IMR-90 (cell line): ENCODE measurements at regions of chr9 and their contacts with region 1.

Region 1: DNA sequence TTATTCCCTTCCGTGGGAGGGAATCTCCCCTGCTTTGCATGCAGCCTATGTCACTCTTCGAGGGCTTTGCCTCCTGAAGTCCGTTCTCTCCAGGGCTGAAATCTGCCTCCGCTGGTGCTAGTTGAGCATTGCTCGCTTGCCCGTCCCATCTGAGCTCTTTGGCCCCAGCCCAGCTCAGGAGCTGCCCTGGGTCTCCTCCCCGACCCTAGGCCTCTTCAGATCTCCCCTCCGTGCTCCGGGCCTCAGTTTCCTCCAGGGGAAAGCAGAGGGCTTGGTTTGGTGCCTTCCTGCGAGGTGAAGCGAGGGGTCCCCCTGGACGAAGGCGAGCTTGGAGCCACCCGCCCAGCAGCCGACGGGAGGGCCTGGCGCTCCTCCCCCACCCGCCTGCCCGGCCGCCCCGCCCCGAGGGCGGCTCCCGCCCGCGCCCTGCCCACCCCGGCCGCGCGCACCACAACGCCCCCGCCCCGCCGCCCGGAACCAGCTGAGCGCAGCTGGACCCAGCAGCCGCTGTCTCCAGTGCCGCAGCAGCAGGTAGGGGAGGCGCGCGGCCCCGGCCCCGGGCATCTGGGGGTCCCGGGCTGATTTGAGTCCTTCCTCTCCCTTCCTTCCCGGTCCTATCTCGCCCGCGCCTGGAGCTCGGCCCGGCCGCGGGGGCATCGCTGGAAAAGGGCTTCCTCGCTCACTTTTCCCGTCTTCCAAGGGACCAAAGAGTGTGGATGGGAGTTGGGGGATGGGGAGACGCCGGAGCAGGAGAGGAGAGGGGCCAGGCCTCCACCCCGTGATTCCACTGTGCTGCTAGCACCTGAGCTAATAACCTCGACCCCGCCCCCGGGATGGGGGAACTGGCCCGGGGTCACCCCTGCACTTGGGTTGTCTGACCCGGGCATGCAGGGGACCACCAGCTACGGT is at the start of gene GSN:
- DNase-seq: peak; percentile 50
- ATAC-seq: peak; percentile 84
- H3K4me3 ChIP-seq: peak within 1 kb of the TSS; percentile 91
- H3K27ac ChIP-seq: peak within 1 kb of the TSS; percentile 87
- H3K4me1 ChIP-seq: peaks cover 24% of the 10 kb centered on the region
- H3K27me3 ChIP-seq: no peaks in the 10 kb centered on the region
- CTCF ChIP-seq: no peak
- POLR2A ChIP-seq: no peak
- RAD21 ChIP-seq: no peak
- total RNA-seq, gene GSN: 461 and 547 TPM in 2 replicates

Region 2: DNA sequence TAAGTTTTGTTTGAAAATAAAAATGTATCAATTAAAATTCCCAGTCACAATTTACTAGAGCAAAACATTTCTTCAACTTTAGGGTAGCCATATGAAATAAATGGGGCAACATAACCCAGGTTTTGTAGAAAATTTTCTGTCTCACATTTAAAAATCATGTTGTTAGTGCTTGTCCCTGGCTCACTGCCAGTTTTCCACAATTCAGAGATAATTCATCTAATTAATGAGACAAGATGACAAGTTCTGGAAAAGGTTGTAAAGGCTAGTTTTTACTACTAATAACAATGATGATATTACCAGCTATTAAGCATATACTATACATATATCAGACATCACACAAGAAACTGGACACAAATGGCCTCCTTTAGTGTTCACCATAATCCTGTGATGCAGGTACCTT is 599.5 kb before region 1 on chr9:
- CTCF ChIA-PET with region 1: no interaction called
- POLR2A ChIA-PET with region 1: no interaction called
- dilution Hi-C with region 1: no loop called
- in situ Hi-C with region 1: no loop called
- intact Hi-C with region 1: no loop called
- DNase-seq: no peak
- ATAC-seq: no peak
- H3K4me3 ChIP-seq: no peak overlapping the region
- H3K27ac ChIP-seq: no peak overlapping the region
- H3K4me1 ChIP-seq: no peaks in the 10 kb centered on the region
- H3K27me3 ChIP-seq: no peaks in the 10 kb centered on the region
- CTCF ChIP-seq: no peak
- POLR2A ChIP-seq: no peak
- RAD21 ChIP-seq: no peak

Region 3: GRCh38 chr9:121222524-121223171 is 45.3 kb before region 1 on chr9:
- CTCF ChIA-PET with region 1: interaction called, 8 read pairs
- POLR2A ChIA-PET with region 1: no interaction called
- dilution Hi-C with region 1: no loop called
- in situ Hi-C with region 1: no loop called
- intact Hi-C with region 1: loop called (anchors 2 kb)
- DNase-seq: peak; percentile 61
- ATAC-seq: 0 out of 2 replicates have a peak, but pooled peaks have one; percentile 63
- H3K4me3 ChIP-seq: no peak overlapping the region
- H3K27ac ChIP-seq: no peak overlapping the region
- H3K4me1 ChIP-seq: 0 out of 2 replicates have a peak, but pooled peaks cover 2% of the 10 kb centered on the region
- H3K27me3 ChIP-seq: no peaks in the 10 kb centered on the region
- CTCF ChIP-seq: peak; percentile 71
- POLR2A ChIP-seq: no peak
- RAD21 ChIP-seq: peak; percentile 67

Region 4: GRCh38 chr9:121278535-121279261 is 10.8 kb after region 1 on chr9:
- CTCF ChIA-PET with region 1: interaction called, 5 read pairs
- POLR2A ChIA-PET with region 1: interaction called, 5 read pairs
- dilution Hi-C with region 1: no loop called
- in situ Hi-C with region 1: no loop called
- intact Hi-C with region 1: loop called (anchors 1 kb)
- DNase-seq: peak; percentile 99
- ATAC-seq: peak; percentile 85
- H3K4me3 ChIP-seq: no peak overlapping the region
- H3K27ac ChIP-seq: peak overlapping the region; percentile 87
- H3K4me1 ChIP-seq: peaks cover 48% of the 10 kb centered on the region
- H3K27me3 ChIP-seq: no peaks in the 10 kb centered on the region
- CTCF ChIP-seq: peak; percentile 72
- POLR2A ChIP-seq: no peak; the same call in 1 of the 2 replicates
- RAD21 ChIP-seq: peak; percentile 65